AG04449 (cell line): ENCODE measurements at regions of chr16 and their contacts with region 1.

Region 1: DNA sequence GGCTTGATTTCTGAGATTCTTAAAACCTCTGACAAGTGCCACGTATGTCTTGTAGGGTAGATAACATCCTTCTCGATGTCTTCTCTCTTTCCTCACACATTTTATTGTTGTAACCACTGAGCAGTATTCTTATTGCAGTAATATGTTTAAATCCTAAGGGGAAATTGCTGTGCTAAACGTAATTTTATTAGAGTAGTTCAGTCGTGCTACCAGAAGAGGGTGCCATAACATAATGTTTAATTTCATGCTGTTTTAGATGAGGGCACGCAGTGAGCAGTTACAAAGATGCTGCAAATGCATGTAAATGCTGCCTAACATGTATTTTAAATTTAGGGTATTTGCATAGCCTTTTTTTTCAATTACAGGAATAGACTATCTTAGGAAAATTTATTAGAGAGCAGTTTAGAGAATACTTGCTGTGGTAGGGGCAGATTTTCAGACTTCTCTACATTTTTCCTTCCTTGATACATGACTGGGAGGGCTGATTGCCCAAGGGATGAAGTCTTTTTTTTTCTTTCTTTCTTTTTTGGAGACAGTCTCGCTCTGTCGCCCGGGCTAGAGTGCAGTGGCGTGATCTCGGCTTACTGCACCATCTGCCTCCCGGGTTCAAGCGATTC is 51.7 kb downstream of the GAN start:
- DNase-seq: no peak
- H3K4me3 ChIP-seq: no peak overlapping the region
- CTCF ChIP-seq: peak; percentile 33

Region 2: GRCh38 chr16:81349996-81350618 is 16.3 kb before region 1 on chr16:
- CTCF ChIA-PET with region 1: interaction called, 23 read pairs
- POLR2A ChIA-PET with region 1: no interaction called
- DNase-seq: no peak
- H3K4me3 ChIP-seq: no peak overlapping the region
- CTCF ChIP-seq: no peak

Region 3: GRCh38 chr16:81384006-81384405 is 17.6 kb after region 1 on chr16:
- CTCF ChIA-PET with region 1: interaction called, 19 read pairs
- POLR2A ChIA-PET with region 1: no interaction called
- DNase-seq: no peak
- H3K4me3 ChIP-seq: no peak overlapping the region
- CTCF ChIP-seq: no peak

Region 4: GRCh38 chr16:81723098-81723723 is 356.8 kb after region 1 on chr16:
- CTCF ChIA-PET with region 1: interaction called, 60 read pairs
- POLR2A ChIA-PET with region 1: no interaction called
- DNase-seq: peak; percentile 50
- H3K4me3 ChIP-seq: no peak overlapping the region
- CTCF ChIP-seq: peak; percentile 57

Region 5: DNA sequence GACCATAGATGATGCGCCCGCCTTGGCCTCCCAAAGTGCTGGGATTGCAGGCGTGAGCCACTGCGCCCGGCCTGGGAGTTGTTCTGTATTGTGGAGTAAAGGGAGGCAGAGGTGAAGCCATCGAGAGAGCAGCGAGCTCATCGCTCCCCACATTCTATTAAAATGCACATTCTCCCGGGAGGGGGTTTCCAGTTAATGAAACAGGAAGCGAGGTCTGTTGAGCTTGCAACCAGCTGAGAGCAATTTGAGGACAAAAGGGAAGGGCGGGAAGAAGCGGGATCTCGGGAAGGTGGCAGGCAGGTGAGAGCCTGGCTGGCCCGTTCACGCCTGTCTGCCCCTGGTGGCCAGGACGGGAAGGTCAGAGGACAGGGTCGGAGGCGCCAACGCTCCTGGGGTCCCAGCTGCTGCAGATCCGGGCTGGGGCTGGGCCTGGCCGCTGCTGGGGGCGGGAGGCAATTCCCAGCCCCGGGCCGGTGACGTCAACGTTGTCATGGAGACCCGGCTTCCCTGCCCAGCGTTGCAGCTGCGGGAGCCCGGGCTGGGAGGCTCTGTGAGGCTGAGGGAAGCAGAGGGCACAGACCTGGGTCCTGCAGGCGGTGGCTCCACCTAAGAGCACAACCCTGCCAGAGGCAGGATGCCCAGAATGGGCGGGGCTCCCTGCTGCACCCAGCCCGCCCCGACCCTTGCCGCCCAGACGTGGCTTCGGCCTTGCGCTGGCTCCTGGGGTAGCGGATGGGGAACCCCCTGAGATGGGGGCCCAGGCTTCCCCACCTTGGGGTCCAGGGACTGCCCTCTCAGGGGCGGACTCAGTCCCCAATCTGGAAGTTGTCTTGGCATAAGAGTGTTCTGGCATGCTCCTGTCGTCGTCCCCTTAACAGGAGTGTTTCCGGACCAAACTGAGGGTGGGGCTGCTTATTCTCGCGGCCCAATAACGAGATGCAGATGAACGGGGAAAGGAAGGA is 363.9 kb after region 1 on chr16:
- CTCF ChIA-PET with region 1: interaction called, 117 read pairs
- POLR2A ChIA-PET with region 1: no interaction called
- DNase-seq: peak; percentile 3
- H3K4me3 ChIP-seq: peak overlapping the region; percentile 58
- CTCF ChIP-seq: peak; percentile 66

Region 6: DNA sequence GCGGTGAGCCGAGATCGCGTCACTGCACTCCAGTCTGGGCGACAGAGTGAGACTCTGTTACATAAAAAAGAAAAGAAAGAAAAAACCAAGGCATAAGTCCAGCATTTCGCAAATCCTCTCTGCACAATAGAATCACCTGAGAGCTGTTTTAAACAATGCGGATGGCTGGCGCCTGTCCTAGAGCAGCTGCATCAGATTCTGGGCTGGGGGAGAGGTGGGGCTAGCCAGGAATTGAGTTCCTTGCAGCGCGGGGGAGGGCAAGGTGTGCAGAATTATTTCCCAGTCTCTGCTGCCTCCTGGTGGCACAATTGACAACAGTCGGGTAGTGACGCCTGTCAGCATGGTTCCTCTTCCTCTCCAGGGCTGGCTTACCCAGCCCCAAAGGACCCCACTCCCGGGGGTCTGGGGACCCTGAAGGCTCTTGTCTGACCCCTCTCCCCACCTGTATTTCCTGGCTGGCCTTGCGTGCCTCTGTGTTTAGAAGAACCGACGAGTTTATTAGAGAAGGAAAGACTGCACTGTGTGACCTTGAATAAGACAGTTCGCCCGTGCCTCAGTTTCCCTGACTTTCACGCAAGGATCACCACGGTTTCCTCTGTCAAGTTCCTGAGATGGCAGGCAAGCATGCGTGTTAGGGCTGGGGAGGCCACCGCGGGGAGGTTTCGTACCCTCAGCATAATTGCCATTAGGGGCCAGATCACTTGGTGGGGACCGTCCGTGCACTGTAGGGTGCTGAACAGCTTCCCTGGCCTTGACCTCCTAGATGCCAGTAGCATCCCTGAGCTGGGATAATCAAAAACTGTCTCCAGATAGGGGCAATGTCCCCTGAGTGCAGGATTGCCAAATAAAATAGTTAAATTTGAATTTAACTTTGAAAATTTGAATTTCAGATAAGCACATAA is 371.7 kb after region 1 on chr16:
- CTCF ChIA-PET with region 1: interaction called, 117 read pairs
- POLR2A ChIA-PET with region 1: no interaction called
- DNase-seq: no peak
- H3K4me3 ChIP-seq: peak overlapping the region; percentile 43
- CTCF ChIP-seq: peak; percentile 82